H1 (cell line): ENCODE measurements at regions of chr3 and their contacts with region 1.

Region 1: DNA sequence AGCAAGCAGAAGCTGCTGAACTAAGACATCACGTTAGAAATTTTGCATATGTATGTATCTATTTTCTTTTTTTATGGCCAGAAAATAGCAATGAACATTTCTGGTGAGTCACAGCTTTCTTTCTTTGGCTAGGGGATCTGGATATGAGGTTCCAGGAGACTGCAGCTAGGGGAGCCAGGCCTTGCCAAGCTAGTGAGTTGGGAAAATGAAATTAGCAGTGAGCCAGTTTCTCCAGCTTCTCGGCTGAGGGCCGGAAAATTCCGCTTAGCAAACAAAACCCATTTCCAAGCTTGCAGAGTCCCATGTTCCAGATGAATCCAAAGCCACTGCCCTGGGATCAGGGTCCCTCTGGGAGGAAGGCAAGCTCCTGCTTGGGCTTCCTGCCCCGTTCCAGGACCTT is 137.6 kb downstream of the SRGAP3 start:
- DNase-seq: no peak
- H3K4me3 ChIP-seq: no peak overlapping the region
- H3K27ac ChIP-seq: no peak overlapping the region
- H3K4me1 ChIP-seq: peaks cover 0 to 2% (median 0%) of the 10 kb centered on the region in 4 experiments; a peak in 3 of 7 replicates
- H3K27me3 ChIP-seq: no peaks in the 10 kb centered on the region
- CTCF ChIP-seq: no peak
- EP300 ChIP-seq: no peak
- POLR2A ChIP-seq: no peak
- RAD21 ChIP-seq: no peak

Region 2: DNA sequence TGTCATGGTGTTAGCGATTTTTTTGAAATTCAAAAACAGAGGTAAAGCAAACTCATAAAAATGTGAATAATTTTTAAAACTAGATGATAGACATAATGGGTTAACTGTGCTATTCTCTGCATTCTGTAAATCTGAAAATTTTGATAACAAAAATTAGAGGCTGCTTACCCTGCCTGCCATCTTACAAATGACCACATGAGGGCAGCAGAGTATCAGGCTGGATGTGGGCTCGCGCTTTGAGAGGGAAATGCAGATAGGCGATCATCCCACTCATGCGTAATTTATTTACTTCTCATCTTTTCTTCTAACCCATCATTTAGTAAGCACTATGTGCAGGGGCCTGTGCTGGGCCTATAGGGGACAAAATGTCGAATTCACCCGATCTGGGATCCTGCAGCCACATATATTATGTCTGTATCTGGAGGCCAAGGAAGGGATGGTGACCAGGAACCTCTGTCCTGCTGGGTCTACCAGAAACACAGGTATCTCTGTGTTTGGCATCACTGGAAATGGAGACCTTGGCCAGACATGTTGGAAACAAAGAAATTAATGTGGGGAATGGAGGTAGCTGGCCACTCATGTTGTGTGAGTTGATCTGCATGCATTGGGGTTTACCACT is 140.8 kb before region 1 on chr3:
- CTCF ChIA-PET with region 1: interaction called, 22 read pairs
- POLR2A ChIA-PET with region 1: no interaction called
- DNase-seq: peak in 1 of 2 experiments; percentile 83
- H3K4me3 ChIP-seq: no peak overlapping the region
- H3K27ac ChIP-seq: no peak overlapping the region
- H3K4me1 ChIP-seq: peaks cover 0 to 6% (median 3%) of the 10 kb centered on the region in 4 experiments; a peak in 4 of 7 replicates
- H3K27me3 ChIP-seq: peaks cover 0 to 2% (median 0%) of the 10 kb centered on the region in 4 experiments; a peak in 1 of 7 replicates
- CTCF ChIP-seq: peak; percentile 72 to 87 (median 83)
- EP300 ChIP-seq: no peak
- POLR2A ChIP-seq: no peak
- RAD21 ChIP-seq: peak; percentile 98

Region 3: GRCh38 chr3:9067352-9067975 is 44.4 kb before region 1 on chr3:
- CTCF ChIA-PET with region 1: interaction called, 13 read pairs
- POLR2A ChIA-PET with region 1: no interaction called
- DNase-seq: peak; percentile 31 to 65
- H3K4me3 ChIP-seq: no peak overlapping the region
- H3K27ac ChIP-seq: no peak overlapping the region
- H3K4me1 ChIP-seq: no peaks in the 10 kb centered on the region
- H3K27me3 ChIP-seq: no peaks in the 10 kb centered on the region
- CTCF ChIP-seq: peak; percentile 32 to 96 (median 94)
- EP300 ChIP-seq: no peak
- POLR2A ChIP-seq: no peak
- RAD21 ChIP-seq: peak; percentile 97

Region 4: GRCh38 chr3:9088441-9089353 is 23.2 kb before region 1 on chr3:
- CTCF ChIA-PET with region 1: interaction called, 39 read pairs
- POLR2A ChIA-PET with region 1: no interaction called
- DNase-seq: no peak
- H3K4me3 ChIP-seq: no peak overlapping the region
- H3K27ac ChIP-seq: no peak overlapping the region
- H3K4me1 ChIP-seq: peaks cover 0 to 4% (median 0%) of the 10 kb centered on the region in 4 experiments; a peak in 2 of 7 replicates
- H3K27me3 ChIP-seq: no peaks in the 10 kb centered on the region
- CTCF ChIP-seq: no peak
- EP300 ChIP-seq: no peak
- POLR2A ChIP-seq: no peak
- RAD21 ChIP-seq: no peak

Region 5: GRCh38 chr3:9122732-9123364 is 11.0 kb after region 1 on chr3:
- CTCF ChIA-PET with region 1: interaction called, 79 read pairs
- POLR2A ChIA-PET with region 1: interaction called, 3 read pairs
- DNase-seq: no peak
- H3K4me3 ChIP-seq: no peak overlapping the region
- H3K27ac ChIP-seq: no peak overlapping the region
- H3K4me1 ChIP-seq: peaks cover 5 to 14% (median 8%) of the 10 kb centered on the region in 4 experiments; a peak in 5 of 7 replicates
- H3K27me3 ChIP-seq: no peaks in the 10 kb centered on the region
- CTCF ChIP-seq: no peak
- EP300 ChIP-seq: no peak
- POLR2A ChIP-seq: no peak
- RAD21 ChIP-seq: no peak

Region 6: DNA sequence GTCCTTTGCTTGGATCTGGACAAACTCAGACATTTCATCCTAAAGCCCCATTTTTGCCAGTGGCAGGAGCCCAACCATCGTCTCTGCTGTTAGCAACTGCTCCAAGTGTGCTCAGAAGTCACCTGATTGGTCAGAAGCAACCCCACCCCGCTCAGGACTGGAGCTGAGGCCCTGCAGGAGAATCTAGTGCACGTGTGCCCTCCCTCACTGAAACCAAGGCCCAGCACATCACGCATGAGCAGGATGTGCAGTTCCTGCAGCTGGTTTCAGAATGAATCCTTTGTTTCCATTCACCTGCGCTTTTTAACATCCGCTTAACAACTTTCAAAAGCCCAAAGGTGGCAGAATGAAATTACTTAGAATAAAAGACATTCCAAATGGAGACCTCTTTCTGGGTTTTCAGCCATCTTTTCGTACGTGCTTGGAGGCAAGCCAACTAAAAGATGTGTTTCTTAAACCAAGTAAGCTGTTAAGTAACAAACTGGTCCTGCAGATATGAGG is 56.4 kb after region 1 on chr3:
- CTCF ChIA-PET with region 1: interaction called, 19 read pairs
- POLR2A ChIA-PET with region 1: no interaction called
- DNase-seq: no peak
- H3K4me3 ChIP-seq: no peak overlapping the region
- H3K27ac ChIP-seq: no peak overlapping the region
- H3K4me1 ChIP-seq: peaks cover 0 to 5% (median 2%) of the 10 kb centered on the region in 4 experiments; a peak in 3 of 7 replicates
- H3K27me3 ChIP-seq: no peaks in the 10 kb centered on the region
- CTCF ChIP-seq: no peak
- EP300 ChIP-seq: no peak
- POLR2A ChIP-seq: no peak
- RAD21 ChIP-seq: no peak

Region 7: DNA sequence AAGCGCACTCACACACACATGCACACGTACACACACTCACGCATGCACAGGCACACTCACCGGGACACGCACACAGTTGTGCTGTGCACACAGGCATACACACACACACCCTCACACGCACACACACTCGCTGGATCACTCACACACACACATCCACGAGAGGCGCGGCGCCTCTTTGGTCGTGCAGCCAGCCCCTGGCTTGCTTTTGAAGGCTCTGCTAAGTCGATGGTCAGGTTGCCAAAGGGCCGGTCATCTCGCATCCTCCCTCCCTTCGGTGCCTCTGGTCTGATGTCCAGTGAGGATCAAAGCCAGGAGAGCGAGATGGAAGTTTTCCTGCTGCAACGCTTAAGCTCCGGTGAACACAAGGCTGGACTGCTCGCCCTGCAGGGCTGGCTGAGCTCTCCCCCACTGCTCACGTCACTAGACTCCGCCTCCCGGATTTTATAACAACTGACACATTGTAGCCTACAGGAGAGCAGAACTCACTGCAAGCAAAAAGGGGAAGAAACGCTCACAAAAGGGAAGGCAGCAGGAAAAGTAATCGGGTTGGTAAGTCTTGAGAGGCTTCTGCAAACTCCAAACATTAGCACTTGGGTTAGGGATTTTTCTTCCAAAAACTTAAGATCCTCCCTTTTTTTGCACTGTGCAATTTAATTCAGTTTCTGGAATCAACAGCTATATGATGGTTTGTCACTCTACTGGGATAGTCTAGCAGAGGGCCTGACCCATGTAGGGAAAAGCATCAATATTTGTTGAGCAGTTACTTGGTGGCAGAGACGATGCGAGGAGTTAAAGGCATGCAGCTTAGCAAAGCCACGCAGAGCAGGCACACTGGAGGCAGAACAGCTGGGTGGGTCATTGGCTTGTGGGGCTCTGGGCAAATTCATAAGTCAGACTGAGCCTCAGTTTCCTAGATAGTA is 137.7 kb after region 1 on chr3 and contains the start of gene SRGAP3:
- CTCF ChIA-PET with region 1: interaction called, 16 read pairs
- POLR2A ChIA-PET with region 1: no interaction called
- DNase-seq: peak; percentile 54 to 87
- H3K4me3 ChIP-seq: peak within 1 kb of the TSS; percentile 59 to 74 (median 72)
- H3K27ac ChIP-seq: no peak within 1 kb of the TSS
- H3K4me1 ChIP-seq: peaks cover 7 to 23% (median 16%) of the 10 kb centered on the region in 4 experiments
- H3K27me3 ChIP-seq: no peaks in the 10 kb centered on the region; a peak in 1 of 7 replicates
- CTCF ChIP-seq: peak in 2 of 3 experiments; percentile 34 to 45; a peak in 2 of 4 replicates
- EP300 ChIP-seq: no peak
- POLR2A ChIP-seq: peak in 1 of 2 experiments; percentile 54; a peak in 2 of 3 replicates
- RAD21 ChIP-seq: peak; percentile 36 to 46
- total RNA-seq, gene SRGAP3: 9.4 and 11.4 TPM in 2 replicates